SK-N-SH (cell line): ENCODE measurements at regions of chr5 and their contacts with region 1.

Region 1: DNA sequence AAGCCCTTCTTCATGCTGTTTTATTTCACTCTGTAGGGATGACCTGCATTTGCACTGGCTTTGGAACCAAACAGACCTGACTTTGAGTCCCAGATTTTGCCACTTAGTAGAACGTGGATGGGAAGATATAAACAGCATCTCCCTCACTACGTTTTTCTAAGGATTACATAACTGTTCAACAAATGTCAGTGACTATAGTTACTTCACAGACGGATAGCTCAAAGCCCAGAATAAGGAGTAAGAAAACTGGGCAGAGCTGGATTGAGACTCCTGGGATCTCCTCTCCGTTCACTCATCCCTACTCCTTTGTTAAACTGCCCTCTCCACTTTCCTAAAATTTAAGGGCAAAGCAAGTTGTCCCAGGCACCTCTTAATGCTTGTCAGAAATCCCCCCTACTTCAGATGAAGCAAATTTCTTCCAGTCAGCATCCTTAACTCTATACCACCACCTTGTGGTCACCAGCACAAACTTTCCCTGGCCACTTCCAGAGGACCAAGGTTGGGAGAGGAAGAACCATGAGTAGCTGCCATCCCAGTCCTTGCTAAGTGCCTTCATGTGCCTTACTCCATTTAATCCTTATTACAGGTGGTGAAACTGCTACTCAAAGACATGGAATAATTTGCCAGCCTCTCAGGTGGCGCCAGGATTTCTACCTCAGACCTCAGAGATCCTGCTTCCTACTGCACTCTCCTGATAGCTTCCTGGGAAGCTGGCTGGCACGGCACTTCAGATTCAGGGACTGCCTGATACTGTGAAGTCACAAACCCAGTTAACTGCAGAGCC is 38.4 kb downstream of the EGR1 start:
- DNase-seq: peak; percentile 70
- H3K4me3 ChIP-seq: no peak overlapping the region
- H3K27ac ChIP-seq: peak overlapping the region in 1 of 2 experiments; percentile 30; a peak in 1 of 4 replicates
- H3K4me1 ChIP-seq: peaks cover 0 to 6% of the 10 kb centered on the region in 2 experiments; a peak in 1 of 4 replicates
- H3K27me3 ChIP-seq: no peaks in the 10 kb centered on the region
- CTCF ChIP-seq: peak; percentile 80
- EP300 ChIP-seq: no peak
- RAD21 ChIP-seq: peak; percentile 90

Region 2: GRCh38 chr5:138438724-138439476 is 64.8 kb before region 1 on chr5 and contains the start of gene REEP2:
- CTCF ChIA-PET with region 1: interaction called, 20 read pairs
- POLR2A ChIA-PET with region 1: no interaction called
- DNase-seq: peak; percentile 94
- H3K4me3 ChIP-seq: peak within 1 kb of the TSS; percentile 65 to 84
- H3K27ac ChIP-seq: peak within 1 kb of the TSS; percentile 18 to 84; a peak in 3 of 4 replicates
- H3K4me1 ChIP-seq: peaks cover 0 to 21% of the 10 kb centered on the region in 2 experiments; a peak in 1 of 4 replicates
- H3K27me3 ChIP-seq: no peaks in the 10 kb centered on the region
- CTCF ChIP-seq: no peak
- EP300 ChIP-seq: no peak
- RAD21 ChIP-seq: no peak
- polyA plus RNA-seq, gene REEP2: 25.4 and 31.2 TPM in 2 replicates

Region 3: DNA sequence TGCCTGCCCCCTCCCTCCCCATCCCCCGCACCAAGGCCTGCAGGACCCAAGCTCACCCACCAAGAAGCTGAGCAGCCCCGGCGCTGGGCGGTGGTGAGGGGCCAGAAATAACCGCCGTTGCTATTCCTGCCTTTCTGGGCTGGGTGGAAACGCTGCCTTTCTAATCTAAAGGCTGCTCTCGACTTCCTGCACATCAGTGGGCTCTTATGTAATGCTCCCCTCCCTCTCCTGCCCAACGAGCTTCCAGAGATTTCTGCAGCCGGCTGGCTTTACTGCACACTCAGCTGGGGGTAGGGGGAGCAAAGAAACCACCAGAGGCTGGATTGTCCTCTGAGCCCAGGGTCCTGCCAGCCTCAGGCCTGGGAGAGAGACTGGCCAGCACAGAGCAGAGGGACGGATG is 45.3 kb before region 1 on chr5:
- CTCF ChIA-PET with region 1: interaction called, 196 read pairs
- POLR2A ChIA-PET with region 1: no interaction called
- DNase-seq: no peak
- H3K4me3 ChIP-seq: no peak overlapping the region
- H3K27ac ChIP-seq: no peak overlapping the region
- H3K4me1 ChIP-seq: peaks cover 0 to 3% of the 10 kb centered on the region in 2 experiments; a peak in 1 of 4 replicates
- H3K27me3 ChIP-seq: no peaks in the 10 kb centered on the region
- CTCF ChIP-seq: no peak
- EP300 ChIP-seq: no peak
- RAD21 ChIP-seq: no peak

Region 4: GRCh38 chr5:138491669-138492559 is 11.8 kb before region 1 on chr5:
- CTCF ChIA-PET with region 1: interaction called, 31 read pairs
- POLR2A ChIA-PET with region 1: interaction called, 3 read pairs
- DNase-seq: peak; percentile 92
- H3K4me3 ChIP-seq: peak overlapping the region; percentile 47 to 61
- H3K27ac ChIP-seq: peak overlapping the region; percentile 25 to 85; a peak in 3 of 4 replicates
- H3K4me1 ChIP-seq: peaks cover 6 to 37% of the 10 kb centered on the region in 2 experiments; a peak in 2 of 4 replicates
- H3K27me3 ChIP-seq: no peaks in the 10 kb centered on the region
- CTCF ChIP-seq: no peak
- EP300 ChIP-seq: no peak
- RAD21 ChIP-seq: no peak

Region 5: GRCh38 chr5:138529801-138530200 is 26.1 kb after region 1 on chr5:
- CTCF ChIA-PET with region 1: interaction called, 23 read pairs
- POLR2A ChIA-PET with region 1: no interaction called
- DNase-seq: no peak
- H3K4me3 ChIP-seq: no peak overlapping the region
- H3K27ac ChIP-seq: no peak overlapping the region
- H3K4me1 ChIP-seq: no peaks in the 10 kb centered on the region
- H3K27me3 ChIP-seq: no peaks in the 10 kb centered on the region
- CTCF ChIP-seq: no peak
- EP300 ChIP-seq: no peak
- RAD21 ChIP-seq: no peak

Region 6: DNA sequence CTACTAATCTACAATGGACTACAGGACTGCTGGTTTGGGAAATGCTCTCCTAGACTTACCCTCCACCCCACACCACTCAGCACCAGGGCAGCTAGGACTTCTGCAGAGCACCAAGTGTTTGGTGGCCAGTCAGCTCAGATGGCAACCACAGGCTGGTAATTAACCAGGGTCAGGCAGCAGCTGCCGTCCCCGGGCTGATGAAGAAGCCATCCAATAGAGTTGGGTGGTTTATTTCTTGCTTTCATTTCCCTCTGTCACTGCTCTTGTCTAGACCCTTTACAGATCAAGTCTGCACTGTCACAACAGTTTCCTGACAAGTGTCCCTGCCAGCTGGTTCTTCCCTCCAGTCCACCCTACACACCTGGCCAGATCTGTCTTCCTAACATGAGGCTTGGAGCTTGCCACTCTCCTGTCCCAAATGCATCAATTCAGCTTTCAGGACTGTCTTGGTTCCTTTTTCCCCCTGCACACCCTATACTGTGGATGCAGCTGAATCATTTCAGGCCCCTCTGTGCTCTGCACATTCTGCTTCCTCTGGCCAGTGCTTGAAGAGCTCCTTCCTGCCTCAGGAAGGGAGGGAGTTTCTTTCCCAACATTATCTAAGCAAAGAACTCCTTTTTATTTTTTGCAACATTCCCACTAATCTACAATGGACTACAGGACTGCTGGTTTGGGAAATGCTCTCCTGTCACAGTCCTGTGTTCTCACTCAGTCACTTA is 101.7 kb after region 1 on chr5:
- CTCF ChIA-PET with region 1: no interaction called
- POLR2A ChIA-PET with region 1: no interaction called
- DNase-seq: no peak
- H3K4me3 ChIP-seq: no peak overlapping the region
- H3K27ac ChIP-seq: no peak overlapping the region
- H3K4me1 ChIP-seq: peaks cover 0 to 53% of the 10 kb centered on the region in 2 experiments; a peak in 2 of 4 replicates
- H3K27me3 ChIP-seq: no peaks in the 10 kb centered on the region
- CTCF ChIP-seq: no peak
- EP300 ChIP-seq: no peak
- RAD21 ChIP-seq: no peak